Lower leg skin (tissue), 4 donors: ENCODE measurements at regions of chr18 and their contacts with region 1.

Region 1: GRCh38 chr18:38186491-38186890 is 620.9 kb upstream of the CELF4 start:
- DNase-seq: no peak
- H3K4me3 ChIP-seq: no peak overlapping the region
- CTCF ChIP-seq: no peak
- POLR2A ChIP-seq: no peak

Region 2: DNA sequence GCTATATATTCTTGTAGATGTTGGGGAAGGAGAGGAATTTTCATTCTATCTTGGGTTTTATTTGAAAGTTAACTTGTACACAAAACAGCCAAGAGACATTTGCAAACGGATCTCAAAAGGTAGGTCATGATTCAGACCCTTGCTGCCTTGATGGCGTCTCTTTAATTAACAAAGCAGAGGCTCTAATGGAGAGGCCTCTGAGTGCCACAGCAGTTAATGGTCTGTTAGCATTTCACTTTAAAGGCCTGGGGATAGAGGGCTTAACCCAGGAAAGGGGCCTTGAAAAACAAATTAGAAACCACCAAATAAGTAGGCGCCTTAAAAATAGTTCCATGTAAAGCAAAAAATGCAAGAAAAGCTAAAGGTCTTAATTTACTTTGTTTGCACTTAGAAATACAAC is 216.0 kb after region 1 on chr18:
- intact Hi-C with region 1: loop called (anchors 10 kb)
- DNase-seq: no peak
- H3K4me3 ChIP-seq: no peak overlapping the region
- CTCF ChIP-seq: no peak
- POLR2A ChIP-seq: no peak

Region 3: DNA sequence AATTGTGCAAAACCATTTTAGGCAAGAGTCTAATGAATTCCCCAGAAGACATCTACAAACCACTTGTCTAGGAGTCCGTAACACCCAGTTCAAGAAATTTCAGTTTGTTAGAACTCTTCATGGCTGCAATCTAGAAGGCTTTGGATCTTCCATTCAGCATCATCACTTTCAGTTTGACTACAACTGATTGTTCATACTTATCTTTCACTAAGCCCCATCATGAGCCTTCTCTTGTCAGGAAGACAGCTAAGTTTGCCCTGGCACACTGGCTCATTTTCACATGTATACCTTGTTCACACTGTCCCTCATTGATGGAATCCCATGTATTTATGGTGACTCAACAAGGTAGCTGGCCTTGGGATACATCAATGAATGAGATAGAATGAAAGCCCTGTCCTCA is 277.5 kb after region 1 on chr18:
- intact Hi-C with region 1: no loop called
- DNase-seq: no peak
- H3K4me3 ChIP-seq: no peak overlapping the region
- CTCF ChIP-seq: no peak
- POLR2A ChIP-seq: no peak